ENCODE measurements at regions of chr10 and their contacts with region 1.

Region 1: DNA sequence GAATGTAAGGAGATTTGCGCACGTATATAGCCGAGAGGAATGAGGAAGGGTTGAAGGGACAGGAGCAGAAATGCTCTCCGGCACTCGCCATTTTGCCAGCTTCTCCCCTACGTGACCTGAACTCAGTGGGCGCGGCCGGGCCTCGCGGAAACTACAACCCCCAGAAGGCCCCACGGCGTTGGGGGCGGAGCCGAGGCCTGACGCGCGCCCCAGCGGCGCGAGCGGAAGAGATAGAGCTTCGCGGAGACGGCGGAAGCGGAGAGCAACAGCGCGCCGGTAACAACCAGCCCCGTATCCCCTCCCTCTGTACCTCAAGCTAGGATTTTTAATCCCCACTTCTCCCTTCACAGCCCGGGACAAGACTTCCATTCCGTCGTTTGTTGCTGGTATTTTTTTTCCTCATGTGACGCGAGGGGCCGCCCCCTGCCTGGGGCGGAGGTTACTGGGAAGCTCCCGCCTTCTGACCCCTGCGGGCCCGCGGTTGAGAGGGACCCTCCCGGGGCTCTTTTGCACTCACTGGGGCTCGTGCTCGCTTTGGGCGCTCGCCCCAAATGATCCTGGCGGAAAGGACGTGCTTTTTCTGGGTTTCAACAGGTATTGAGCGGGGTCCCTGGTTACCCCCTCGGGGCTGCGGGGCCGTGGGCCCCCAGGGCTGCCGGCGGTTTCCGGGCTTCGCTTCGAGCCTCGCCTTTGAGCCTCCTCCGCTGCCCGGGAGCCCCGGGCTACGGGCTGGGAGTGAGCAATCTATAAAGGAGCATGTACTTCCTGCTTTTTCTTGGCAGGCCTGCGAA is at the start of gene R3HCC1L:
- DNase-seq: peak; percentile 89
- H3K4me3 Mint-ChIP-seq: peak within 1 kb of the TSS; percentile 75
- H3K27ac Mint-ChIP-seq: peak within 1 kb of the TSS; percentile 95
- H3K4me1 Mint-ChIP-seq: peaks cover 11% of the 10 kb centered on the region
- H3K27me3 Mint-ChIP-seq: no peaks in the 10 kb centered on the region
- CTCF ChIP-seq: no peak
- total RNA-seq, gene R3HCC1L: 10.7 and 12.2 TPM in 2 replicates

Region 2: DNA sequence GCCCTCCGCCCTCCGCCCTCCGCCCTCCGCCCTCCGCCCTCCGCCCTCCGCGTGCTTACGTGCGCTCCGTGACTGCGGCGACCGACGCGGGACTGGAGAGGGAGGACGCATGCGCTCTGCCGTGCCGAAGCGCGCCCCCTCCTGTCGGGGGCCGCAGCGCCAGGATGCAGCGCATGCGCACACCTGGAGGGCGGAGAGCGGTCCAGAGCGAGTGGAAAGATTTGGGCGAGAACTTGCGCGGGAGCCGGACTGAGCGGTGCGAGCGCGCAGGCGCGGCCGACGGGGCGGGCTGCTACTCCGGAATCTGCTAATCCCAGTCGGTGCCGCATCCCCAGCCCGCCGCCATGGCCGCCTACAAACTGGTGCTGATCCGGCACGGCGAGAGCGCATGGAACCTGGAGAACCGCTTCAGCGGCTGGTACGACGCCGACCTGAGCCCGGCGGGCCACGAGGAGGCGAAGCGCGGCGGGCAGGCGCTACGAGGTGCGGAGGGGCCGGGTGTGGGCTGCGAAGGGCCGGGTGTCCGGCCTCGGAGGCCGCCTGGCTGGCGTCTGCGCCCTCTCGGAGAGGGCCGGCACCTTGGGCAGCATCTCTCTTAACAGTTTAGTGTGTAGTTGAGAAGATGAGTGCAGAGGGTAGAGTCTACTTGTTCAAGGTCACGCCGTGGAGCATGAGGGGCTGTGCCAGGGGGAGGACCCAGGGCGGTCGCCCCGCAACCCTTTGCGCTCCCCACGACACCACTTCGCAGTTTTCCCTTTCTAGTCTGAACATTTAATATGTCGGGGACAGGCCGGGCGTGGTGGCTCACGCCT is 708.5 kb before region 1 on chr10 and contains the start of gene PGAM1:
- CTCF ChIA-PET with region 1: no interaction called
- POLR2A ChIA-PET with region 1: no interaction called
- intact Hi-C with region 1: no loop called
- DNase-seq: peak; percentile 95
- H3K4me3 Mint-ChIP-seq: peak within 1 kb of the TSS; percentile 77
- H3K27ac Mint-ChIP-seq: peak within 1 kb of the TSS; percentile 80
- H3K4me1 Mint-ChIP-seq: peaks cover 12% of the 10 kb centered on the region
- H3K27me3 Mint-ChIP-seq: no peaks in the 10 kb centered on the region
- CTCF ChIP-seq: peak; percentile 53
- total RNA-seq, gene PGAM1: 235 and 248 TPM in 2 replicates

Region 3: DNA sequence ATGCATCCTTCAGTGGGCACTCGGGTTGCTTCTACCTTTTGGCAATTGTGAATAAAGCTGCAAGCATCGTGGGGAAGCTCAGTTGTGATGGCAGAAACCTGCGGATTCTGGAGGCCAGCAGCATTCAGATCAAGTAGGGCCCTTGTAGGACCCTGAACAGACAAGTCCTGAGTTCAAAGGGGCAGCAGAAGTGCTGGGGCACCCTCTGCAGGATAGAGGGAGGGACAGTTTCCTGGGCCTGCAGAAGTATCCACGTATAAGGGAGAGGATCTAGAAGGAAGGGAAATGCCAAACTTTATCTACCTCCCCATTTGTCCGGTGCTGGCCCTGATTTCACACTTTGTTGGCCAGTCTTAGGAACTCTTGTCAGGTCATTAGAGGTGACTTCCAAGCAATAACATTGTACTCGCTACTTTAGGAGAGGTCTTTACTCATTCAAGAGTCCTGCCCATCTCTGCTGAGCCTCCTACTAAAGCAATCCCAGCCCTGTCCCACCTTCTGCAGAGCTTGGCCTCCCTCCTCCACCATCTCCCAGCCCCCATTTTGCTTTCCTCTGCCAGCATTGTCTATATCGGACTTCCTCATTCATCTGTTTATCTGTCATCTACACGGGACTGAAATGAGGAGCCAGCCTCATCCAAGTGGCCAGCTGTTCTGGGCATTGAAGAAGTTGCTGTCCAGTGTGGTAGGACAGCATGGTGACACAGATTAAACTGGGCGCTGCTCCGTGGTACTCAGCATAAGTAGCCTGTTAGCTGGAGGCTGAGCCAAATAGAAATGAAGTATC is 26.8 kb before region 1 on chr10:
- CTCF ChIA-PET with region 1: no interaction called
- POLR2A ChIA-PET with region 1: no interaction called
- intact Hi-C with region 1: no loop called
- DNase-seq: no peak
- H3K4me3 Mint-ChIP-seq: no peak overlapping the region
- H3K27ac Mint-ChIP-seq: no peak overlapping the region
- H3K4me1 Mint-ChIP-seq: no peaks in the 10 kb centered on the region
- H3K27me3 Mint-ChIP-seq: peaks cover 70% of the 10 kb centered on the region
- CTCF ChIP-seq: no peak

Region 4: DNA sequence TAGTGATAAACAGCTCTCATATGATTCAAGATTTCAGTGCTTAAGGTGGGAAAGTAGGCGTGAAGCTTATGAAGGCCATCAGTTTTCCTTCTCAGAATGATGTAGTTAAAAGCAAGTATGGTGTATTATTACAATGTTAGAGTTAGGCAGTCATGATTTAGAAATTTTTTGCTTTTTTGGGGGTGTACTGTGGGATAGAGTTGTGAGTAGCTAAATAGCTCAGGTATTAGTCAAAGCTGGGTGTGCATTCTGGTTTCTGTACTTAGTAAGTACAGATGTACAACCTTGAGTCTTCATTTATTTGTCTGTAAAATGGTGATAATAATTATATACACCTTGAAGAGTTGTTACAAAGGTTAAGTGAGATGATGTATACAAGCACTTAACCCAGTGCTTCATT is 52.1 kb after region 1 on chr10:
- CTCF ChIA-PET with region 1: interaction called, 3 read pairs
- POLR2A ChIA-PET with region 1: no interaction called
- intact Hi-C with region 1: loop called (anchors 1 kb)
- DNase-seq: no peak
- H3K4me3 Mint-ChIP-seq: no peak overlapping the region
- H3K27ac Mint-ChIP-seq: no peak overlapping the region
- H3K4me1 Mint-ChIP-seq: peaks cover 13% of the 10 kb centered on the region
- H3K27me3 Mint-ChIP-seq: no peaks in the 10 kb centered on the region
- CTCF ChIP-seq: no peak

Region 5: DNA sequence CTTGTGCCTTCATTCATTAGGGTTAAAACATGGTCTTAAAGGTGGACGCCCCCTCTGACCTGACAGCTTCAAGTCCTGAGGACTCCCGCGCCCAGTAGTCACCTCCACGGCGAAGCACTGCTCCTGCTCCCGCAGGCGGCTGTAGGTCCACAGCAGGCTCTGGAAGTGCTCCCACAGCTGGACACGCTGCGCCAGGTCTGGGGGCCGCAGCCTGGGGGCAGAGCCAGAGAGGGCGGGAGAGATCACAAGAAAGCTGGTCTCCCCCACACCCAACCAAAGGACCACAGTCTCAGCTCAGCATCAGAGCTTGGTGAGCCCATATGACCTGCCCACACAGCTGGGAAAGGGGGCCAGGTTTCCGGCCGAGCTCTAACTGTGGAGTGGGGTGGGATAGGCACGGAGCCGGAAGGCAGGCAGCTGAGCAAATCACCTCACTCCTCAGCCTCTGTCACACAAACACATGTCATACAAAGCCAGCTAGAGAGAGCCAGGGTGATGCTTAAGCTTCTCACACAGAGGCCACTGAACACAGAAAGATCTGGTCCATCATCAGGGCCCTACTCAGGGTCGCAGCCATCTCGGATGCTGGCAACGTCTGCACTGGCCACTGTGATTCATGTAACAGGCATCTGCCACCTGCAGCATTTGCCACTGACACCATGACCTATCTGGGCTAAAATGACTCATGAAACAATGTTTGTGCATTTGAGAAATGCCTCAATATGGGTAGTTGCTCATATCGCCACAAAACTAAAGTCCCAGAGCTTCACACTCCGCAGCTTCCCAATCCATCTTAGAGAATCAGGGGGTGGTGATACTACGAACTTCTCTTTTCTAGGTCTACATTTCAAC is 299.5 kb after region 1 on chr10:
- CTCF ChIA-PET with region 1: no interaction called
- POLR2A ChIA-PET with region 1: no interaction called
- intact Hi-C with region 1: no loop called
- DNase-seq: no peak
- H3K4me3 Mint-ChIP-seq: no peak overlapping the region
- H3K27ac Mint-ChIP-seq: no peak overlapping the region
- H3K4me1 Mint-ChIP-seq: no peaks in the 10 kb centered on the region
- H3K27me3 Mint-ChIP-seq: no peaks in the 10 kb centered on the region
- CTCF ChIP-seq: no peak